ENCODE measurements at regions of chr1 and their contacts with region 1.

Region 1: GRCh38 chr1:103371234-103371633 is 154.3 kb upstream of the RNPC3 start:
- DNase-seq: peak in 1 of 6 donors; percentile 15
- ATAC-seq: peak in 2 of 4 donors; percentile 36 to 55
- H3K4me3 ChIP-seq: no peak overlapping the region
- H3K27ac ChIP-seq: no peak overlapping the region
- H3K4me1 ChIP-seq: no peaks in the 10 kb centered on the region
- H3K27me3 ChIP-seq: no peaks in the 10 kb centered on the region
- CTCF ChIP-seq: no peak

Region 2: DNA sequence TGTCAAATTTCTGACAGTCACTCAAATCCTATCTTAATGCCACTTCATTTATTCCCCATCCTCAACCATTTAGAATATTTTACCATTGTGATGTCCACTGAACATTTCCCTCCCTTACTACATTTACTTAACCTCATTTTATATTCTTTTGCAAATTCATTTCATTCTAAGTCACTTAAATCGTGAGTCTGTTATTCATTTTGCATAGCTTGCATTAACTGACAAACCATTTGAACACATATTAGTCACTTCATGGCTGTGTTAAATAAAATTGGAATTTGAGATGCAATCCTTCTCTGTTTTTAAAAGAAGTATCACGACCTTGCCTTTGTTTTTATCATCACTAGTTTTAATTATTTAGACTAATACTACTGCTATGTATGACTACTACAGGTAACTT is 63.5 kb before region 1 on chr1:
- intact Hi-C with region 1: no loop called
- DNase-seq: no peak
- ATAC-seq: no peak
- H3K4me3 ChIP-seq: no peak overlapping the region
- H3K27ac ChIP-seq: no peak overlapping the region
- H3K4me1 ChIP-seq: no peaks in the 10 kb centered on the region
- H3K27me3 ChIP-seq: no peaks in the 10 kb centered on the region
- CTCF ChIP-seq: no peak

Region 3: GRCh38 chr1:103448560-103448959 is 77.3 kb after region 1 on chr1:
- intact Hi-C with region 1: loop called in 1 of 3 experiments (anchors 10 kb)
- DNase-seq: no peak
- ATAC-seq: no peak
- H3K4me3 ChIP-seq: no peak overlapping the region
- H3K27ac ChIP-seq: no peak overlapping the region
- H3K4me1 ChIP-seq: no peaks in the 10 kb centered on the region
- H3K27me3 ChIP-seq: no peaks in the 10 kb centered on the region
- CTCF ChIP-seq: no peak